ENCODE measurements at regions of chr10 and their contacts with region 1.

Region 1: GRCh38 chr10:112183329-112184051 is at the start of gene GPAM:
- DNase-seq: peak; percentile 98
- H3K4me3 ChIP-seq: peak within 1 kb of the TSS; percentile 41 to 84 (median 66)
- H3K27ac ChIP-seq: peak within 1 kb of the TSS; percentile 74 to 82 (median 79)
- H3K4me1 ChIP-seq: peaks cover 10 to 13% (median 12%) of the 10 kb centered on the region in 4 donors
- H3K27me3 ChIP-seq: no peaks in the 10 kb centered on the region
- CTCF ChIP-seq: peak in 1 of 5 experiments; percentile 28
- EP300 ChIP-seq: peak; percentile 19
- POLR2A ChIP-seq: peak; percentile 80
- total RNA-seq, gene GPAM: 1.00 to 6.6 (median 5.8) TPM

Region 2: GRCh38 chr10:112446855-112447711 is 263.6 kb after region 1 on chr10 and contains the starts of genes VTI1A and ZDHHC6:
- in situ Hi-C with region 1: loop called (anchors 25 kb)
- intact Hi-C with region 1: no loop called
- DNase-seq: peak; percentile 88
- H3K4me3 ChIP-seq: peak within 1 kb of the TSS; percentile 63 to 85 (median 76)
- H3K27ac ChIP-seq: peak within 1 kb of the TSS; percentile 86 to 90 (median 89)
- H3K4me1 ChIP-seq: peaks cover 7 to 36% (median 23%) of the 10 kb centered on the region in 4 donors
- H3K27me3 ChIP-seq: no peaks in the 10 kb centered on the region
- CTCF ChIP-seq: peak in 2 of 5 experiments; percentile 11 to 27
- EP300 ChIP-seq: no peak
- POLR2A ChIP-seq: peak; percentile 82
- total RNA-seq, gene VTI1A: 65.8 to 211 (median 149) TPM
- total RNA-seq, gene ZDHHC6: 13.1 to 46.4 (median 24.6) TPM